Activated CD4-positive, alpha-beta T cell treated with anti-CD3 and anti-CD28 coated beads, Interleukin-2, amount 10 ng/mL, durations not matched to agents 7 days and 5 days (primary cell): ENCODE measurements at regions of chr9 and their contacts with region 1.

Region 1: GRCh38 chr9:114681594-114682332 is at the start of gene TEX48:
- DNase-seq: peak; percentile 91
- H3K4me3 Mint-ChIP-seq: no peak within 1 kb of the TSS
- H3K27ac Mint-ChIP-seq: peak within 1 kb of the TSS; percentile 90
- H3K4me1 Mint-ChIP-seq: peaks cover 58% of the 10 kb centered on the region
- H3K27me3 Mint-ChIP-seq: peaks cover 3% of the 10 kb centered on the region
- total RNA-seq, gene TEX48: 0.83 to 0.97 TPM

Region 2: GRCh38 chr9:114671605-114672004 is 10.2 kb before region 1 on chr9:
- CTCF ChIA-PET with region 1: interaction called, 17 read pairs
- POLR2A ChIA-PET with region 1: no interaction called
- DNase-seq: no peak
- H3K4me3 Mint-ChIP-seq: no peak overlapping the region
- H3K27ac Mint-ChIP-seq: no peak overlapping the region
- H3K4me1 Mint-ChIP-seq: peaks cover 8% of the 10 kb centered on the region
- H3K27me3 Mint-ChIP-seq: peaks cover 2% of the 10 kb centered on the region

Region 3: DNA sequence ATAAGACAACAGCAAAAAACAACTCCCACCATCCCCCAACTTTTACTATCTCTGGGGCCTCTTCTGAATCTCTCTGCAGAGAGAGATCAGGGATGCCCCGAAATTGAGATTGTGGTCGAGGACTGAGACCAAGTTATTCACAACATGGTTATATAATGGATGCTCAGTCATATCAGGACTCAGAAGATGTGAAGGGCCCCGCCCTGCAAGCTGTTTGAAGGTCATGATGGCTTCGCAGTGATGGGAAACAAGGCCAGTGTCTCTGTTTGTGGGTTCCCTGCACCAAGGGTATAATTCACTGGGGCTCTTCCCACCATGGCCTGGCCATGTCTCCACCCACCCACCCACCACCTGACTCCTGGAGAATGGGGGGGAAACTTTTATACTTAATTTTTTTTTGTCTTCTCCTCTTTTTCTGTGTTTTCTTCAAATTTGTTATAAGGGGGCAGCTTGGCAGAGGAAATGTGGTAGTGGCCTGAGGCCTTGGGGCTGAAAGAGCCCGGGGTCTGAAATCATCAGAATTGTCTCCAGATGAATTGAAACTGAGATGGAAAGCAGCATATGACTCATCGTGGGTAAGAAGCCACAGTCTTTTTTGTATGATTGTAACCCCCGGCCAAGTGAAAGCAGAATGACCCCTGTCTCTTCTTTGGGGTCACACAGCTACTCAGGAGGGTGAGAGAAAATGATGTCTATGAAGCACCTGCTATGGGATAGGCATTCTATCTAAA is 15.2 kb after region 1 on chr9:
- CTCF ChIA-PET with region 1: interaction called, 27 read pairs
- POLR2A ChIA-PET with region 1: no interaction called
- DNase-seq: peak; percentile 77
- H3K4me3 Mint-ChIP-seq: peak overlapping the region; percentile 33
- H3K27ac Mint-ChIP-seq: peak overlapping the region; percentile 95
- H3K4me1 Mint-ChIP-seq: peaks cover 93% of the 10 kb centered on the region
- H3K27me3 Mint-ChIP-seq: no peaks in the 10 kb centered on the region

Region 4: DNA sequence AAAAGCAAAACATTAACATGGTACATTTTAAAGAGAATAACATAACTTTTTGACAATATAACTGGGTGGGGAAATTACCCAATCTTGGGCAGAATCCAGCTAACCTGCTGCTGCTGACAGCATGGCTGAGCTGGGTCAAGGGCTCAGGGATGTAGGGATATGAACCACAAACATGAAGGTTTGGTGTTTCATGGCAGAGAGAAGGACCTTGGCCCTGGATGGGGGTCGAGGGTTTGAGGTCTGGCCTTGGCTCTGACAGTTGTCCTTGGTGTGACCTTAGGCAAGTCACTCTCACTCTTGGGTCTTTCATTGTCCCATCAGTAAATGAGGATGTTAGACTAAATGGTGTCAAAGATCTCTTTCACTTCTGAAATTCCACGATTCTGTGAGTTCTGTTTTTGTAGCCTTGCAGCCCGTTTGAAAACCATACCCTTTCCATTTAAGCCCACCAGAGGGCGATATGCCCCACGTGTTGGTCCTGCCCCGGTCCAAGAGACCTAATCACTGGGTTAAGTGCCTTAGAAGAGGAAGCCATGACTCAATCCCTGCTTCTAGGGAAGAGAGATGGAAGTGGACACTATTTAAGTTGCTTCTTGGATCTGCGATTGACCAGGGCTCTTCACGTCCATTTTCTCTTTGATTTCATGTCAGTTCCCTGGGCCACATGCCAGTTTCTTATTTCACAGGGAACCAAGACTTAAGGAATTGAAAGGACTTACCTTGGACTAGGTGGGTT is 57.0 kb after region 1 on chr9:
- CTCF ChIA-PET with region 1: interaction called, 10 read pairs
- POLR2A ChIA-PET with region 1: no interaction called
- DNase-seq: peak; percentile 77
- H3K4me3 Mint-ChIP-seq: no peak overlapping the region
- H3K27ac Mint-ChIP-seq: peak overlapping the region; percentile 74
- H3K4me1 Mint-ChIP-seq: peaks cover 61% of the 10 kb centered on the region
- H3K27me3 Mint-ChIP-seq: no peaks in the 10 kb centered on the region

Region 5: DNA sequence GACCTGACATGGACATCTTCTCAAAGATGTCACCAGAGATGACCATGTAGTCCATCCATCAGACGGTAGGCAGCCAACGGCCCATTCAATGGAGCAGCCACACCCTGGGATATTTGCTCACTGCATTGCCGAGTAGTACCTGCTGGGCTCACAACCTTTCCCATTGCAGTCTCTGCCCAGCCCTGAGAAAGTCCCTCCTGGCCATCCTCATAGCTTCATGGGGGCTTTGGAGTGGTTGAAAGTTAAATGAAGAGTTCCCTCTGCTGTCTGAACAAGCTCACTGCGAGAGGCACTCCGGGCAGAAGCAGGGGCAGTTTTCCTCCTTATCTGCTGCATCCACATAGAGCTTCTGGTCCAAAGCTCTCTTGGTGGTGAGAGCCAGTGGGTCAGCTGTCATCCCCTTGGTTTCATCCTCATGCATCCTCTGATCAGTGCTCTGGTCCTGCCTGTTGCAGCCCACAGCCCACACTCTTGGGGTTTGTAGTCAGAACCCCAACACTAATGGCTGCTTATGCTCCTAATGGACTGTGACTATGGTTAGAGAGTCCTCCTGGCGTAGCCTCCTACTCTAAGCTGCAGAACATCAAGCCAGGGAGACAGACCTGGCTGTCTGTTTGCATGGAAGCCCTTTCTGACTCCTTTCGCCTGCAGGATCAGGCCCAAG is 225.3 kb after region 1 on chr9:
- CTCF ChIA-PET with region 1: interaction called, 26 read pairs
- POLR2A ChIA-PET with region 1: no interaction called
- DNase-seq: peak; percentile 31
- H3K4me3 Mint-ChIP-seq: peak overlapping the region; percentile 59
- H3K27ac Mint-ChIP-seq: peak overlapping the region; percentile 96
- H3K4me1 Mint-ChIP-seq: peaks cover 60% of the 10 kb centered on the region
- H3K27me3 Mint-ChIP-seq: no peaks in the 10 kb centered on the region

Region 6: GRCh38 chr9:114929201-114929600 is 247.4 kb after region 1 on chr9:
- CTCF ChIA-PET with region 1: interaction called, 12 read pairs
- POLR2A ChIA-PET with region 1: no interaction called
- DNase-seq: peak; percentile 48
- H3K4me3 Mint-ChIP-seq: peak overlapping the region; percentile 81
- H3K27ac Mint-ChIP-seq: peak overlapping the region; percentile 98
- H3K4me1 Mint-ChIP-seq: peaks cover 55% of the 10 kb centered on the region
- H3K27me3 Mint-ChIP-seq: no peaks in the 10 kb centered on the region

Region 7: DNA sequence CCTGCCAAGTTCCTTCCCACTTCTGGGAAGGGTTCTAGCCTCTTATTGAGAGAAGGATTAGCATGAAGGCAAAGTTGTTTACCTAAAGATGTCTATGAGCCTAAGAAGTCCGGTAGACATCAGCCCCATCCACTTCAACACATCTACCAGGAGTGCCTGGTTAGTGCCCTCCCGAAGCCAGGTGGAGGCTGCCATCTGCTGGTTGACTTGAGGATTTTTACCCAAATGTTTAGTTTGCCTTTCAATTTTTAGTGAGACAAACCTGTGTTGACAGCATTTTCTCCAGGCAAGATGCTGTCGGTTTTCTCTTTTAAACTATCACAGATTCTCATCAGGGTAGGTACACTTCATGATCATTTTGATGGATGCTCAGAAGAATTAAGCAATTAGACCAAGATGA is 332.2 kb after region 1 on chr9:
- CTCF ChIA-PET with region 1: interaction called, 34 read pairs
- POLR2A ChIA-PET with region 1: no interaction called
- DNase-seq: peak; percentile 91
- H3K4me3 Mint-ChIP-seq: no peak overlapping the region
- H3K27ac Mint-ChIP-seq: peak overlapping the region; percentile 78
- H3K4me1 Mint-ChIP-seq: peaks cover 49% of the 10 kb centered on the region
- H3K27me3 Mint-ChIP-seq: peaks cover 2% of the 10 kb centered on the region